MCF 10A (cell line): ENCODE measurements at regions of chr6 and their contacts with region 1.

Region 1: GRCh38 chr6:53794720-53795253 is at the start of gene LRRC1:
- DNase-seq: peak; percentile 91
- H3K4me3 Mint-ChIP-seq: peak within 1 kb of the TSS; percentile 92
- H3K27ac Mint-ChIP-seq: peak within 1 kb of the TSS; percentile 87
- H3K4me1 Mint-ChIP-seq: peaks cover 29% of the 10 kb centered on the region
- H3K27me3 Mint-ChIP-seq: no peaks in the 10 kb centered on the region
- CTCF ChIP-seq: no peak
- total RNA-seq, gene LRRC1: 16.0 and 18.6 TPM in 2 replicates

Region 2: GRCh38 chr6:53439556-53439955 is 355.2 kb before region 1 on chr6:
- CTCF ChIA-PET with region 1: no interaction called
- POLR2A ChIA-PET with region 1: no interaction called
- intact Hi-C with region 1: no loop called
- DNase-seq: no peak
- H3K4me3 Mint-ChIP-seq: no peak overlapping the region
- H3K27ac Mint-ChIP-seq: no peak overlapping the region
- H3K4me1 Mint-ChIP-seq: peaks cover 22% of the 10 kb centered on the region
- H3K27me3 Mint-ChIP-seq: no peaks in the 10 kb centered on the region
- CTCF ChIP-seq: no peak

Region 3: DNA sequence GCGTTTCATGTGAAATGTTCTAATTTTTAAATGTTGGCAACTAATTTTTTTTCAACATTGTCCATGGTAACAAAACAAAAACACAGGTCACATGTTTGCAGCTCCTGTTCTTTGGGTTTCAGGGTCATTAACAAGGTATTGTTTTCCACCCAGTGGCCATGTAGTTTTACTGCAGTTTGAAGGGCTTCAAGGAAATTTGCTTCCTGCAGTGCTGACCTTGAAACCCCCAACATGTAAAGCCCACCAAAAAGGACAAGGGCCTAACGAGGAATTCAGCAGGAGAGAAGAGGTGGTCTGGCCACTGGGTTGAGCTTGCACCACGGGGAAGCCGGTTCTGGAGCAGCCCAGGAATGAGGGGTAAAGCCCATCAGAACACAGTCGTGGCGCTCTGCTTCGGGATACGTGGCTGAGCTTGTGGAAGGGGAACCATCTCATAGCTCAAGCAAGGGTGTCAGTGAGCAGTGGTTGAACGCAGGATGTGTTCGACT is 115.3 kb before region 1 on chr6:
- CTCF ChIA-PET with region 1: no interaction called
- POLR2A ChIA-PET with region 1: no interaction called
- intact Hi-C with region 1: no loop called
- DNase-seq: peak; percentile 58
- H3K4me3 Mint-ChIP-seq: no peak overlapping the region
- H3K27ac Mint-ChIP-seq: peak overlapping the region; percentile 37
- H3K4me1 Mint-ChIP-seq: no peaks in the 10 kb centered on the region
- H3K27me3 Mint-ChIP-seq: no peaks in the 10 kb centered on the region
- CTCF ChIP-seq: peak; percentile 35

Region 4: GRCh38 chr6:53718597-53719460 is 76.0 kb before region 1 on chr6:
- CTCF ChIA-PET with region 1: interaction called, 20 read pairs
- POLR2A ChIA-PET with region 1: interaction called, 28 read pairs
- intact Hi-C with region 1: no loop called
- DNase-seq: peak; percentile 80
- H3K4me3 Mint-ChIP-seq: no peak overlapping the region
- H3K27ac Mint-ChIP-seq: peak overlapping the region; percentile 85
- H3K4me1 Mint-ChIP-seq: peaks cover 5% of the 10 kb centered on the region
- H3K27me3 Mint-ChIP-seq: no peaks in the 10 kb centered on the region
- CTCF ChIP-seq: peak; percentile 75

Region 5: DNA sequence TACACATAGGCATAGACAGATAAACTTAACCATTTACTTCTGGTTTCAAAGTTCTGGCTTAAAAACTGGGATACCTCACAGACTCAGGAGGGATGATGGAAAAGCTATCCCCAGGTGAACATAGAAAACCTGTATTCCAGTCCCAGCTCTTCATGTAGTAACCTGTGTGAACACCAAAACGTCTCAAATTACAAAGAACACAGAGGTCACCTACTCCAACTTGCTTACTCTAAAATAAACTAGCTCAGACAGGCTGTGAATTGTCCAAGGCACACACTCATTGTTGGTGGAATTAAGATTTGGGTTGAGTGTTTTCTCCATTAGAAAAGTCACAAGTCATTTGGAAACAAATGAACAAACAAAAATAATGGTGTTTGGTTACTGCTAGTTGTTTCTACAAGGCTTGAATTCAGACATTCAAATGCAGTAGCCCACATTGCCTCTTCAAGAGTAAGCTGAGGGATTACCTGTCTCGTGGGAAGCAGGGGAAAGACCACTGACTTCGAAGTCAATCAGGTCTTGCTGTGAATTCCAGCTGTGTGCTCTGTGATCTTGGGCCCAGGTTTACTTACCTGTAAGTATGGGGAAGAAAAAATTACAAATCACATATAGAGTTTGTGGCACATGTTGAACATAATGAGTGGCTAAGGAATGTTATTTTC is 48.2 kb before region 1 on chr6:
- CTCF ChIA-PET with region 1: interaction called, 12 read pairs
- POLR2A ChIA-PET with region 1: interaction called, 266 read pairs
- intact Hi-C with region 1: no loop called
- DNase-seq: peak; percentile 58
- H3K4me3 Mint-ChIP-seq: no peak overlapping the region
- H3K27ac Mint-ChIP-seq: peak overlapping the region; percentile 9
- H3K4me1 Mint-ChIP-seq: peaks cover 7% of the 10 kb centered on the region
- H3K27me3 Mint-ChIP-seq: no peaks in the 10 kb centered on the region
- CTCF ChIP-seq: no peak

Region 6: DNA sequence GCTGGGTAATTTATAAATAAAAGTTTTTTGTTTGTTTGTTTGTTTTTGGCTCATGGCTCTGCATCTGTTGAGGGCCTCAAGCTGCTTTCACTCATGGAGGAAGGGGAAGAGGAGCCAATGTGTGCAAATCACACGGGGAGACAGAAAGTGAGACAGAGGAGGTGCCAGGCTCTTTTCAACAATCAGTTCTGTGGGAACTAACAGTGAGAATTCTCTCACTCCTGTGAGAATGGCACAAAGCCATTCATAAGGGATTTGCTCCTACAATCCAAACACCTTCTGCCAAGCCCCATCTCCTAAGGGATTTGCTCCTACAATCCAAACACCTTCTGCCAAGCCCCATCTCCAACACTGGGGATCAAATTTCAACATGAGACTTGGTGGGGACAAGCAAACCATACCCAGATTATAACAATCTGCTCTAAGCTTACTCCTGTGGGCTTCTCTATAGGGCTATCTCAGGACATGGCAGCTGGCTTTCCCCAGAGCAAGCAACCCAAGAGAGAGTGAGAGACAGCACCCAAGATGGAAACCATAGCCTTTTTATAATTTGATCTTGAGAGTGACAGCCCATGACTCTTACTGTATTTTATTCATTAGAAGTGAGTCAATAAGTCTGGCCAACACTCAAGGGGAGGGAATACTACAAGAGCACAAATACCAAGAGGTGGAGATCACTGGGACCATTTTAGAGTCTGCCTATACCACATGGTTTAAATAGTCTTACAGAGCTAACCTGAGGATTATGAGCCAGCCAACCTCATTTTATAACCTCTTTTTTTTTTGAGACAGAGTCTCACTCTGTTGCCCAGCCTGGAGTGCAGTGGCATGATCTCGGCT is 22.8 kb before region 1 on chr6:
- CTCF ChIA-PET with region 1: interaction called, 6 read pairs
- POLR2A ChIA-PET with region 1: interaction called, 26 read pairs
- intact Hi-C with region 1: no loop called
- DNase-seq: no peak
- H3K4me3 Mint-ChIP-seq: no peak overlapping the region
- H3K27ac Mint-ChIP-seq: no peak overlapping the region
- H3K4me1 Mint-ChIP-seq: peaks cover 10% of the 10 kb centered on the region
- H3K27me3 Mint-ChIP-seq: no peaks in the 10 kb centered on the region
- CTCF ChIP-seq: no peak

Region 7: GRCh38 chr6:53829698-53830221 is 35.0 kb after region 1 on chr6:
- CTCF ChIA-PET with region 1: no interaction called
- POLR2A ChIA-PET with region 1: interaction called, 35 read pairs
- intact Hi-C with region 1: no loop called
- DNase-seq: no peak
- H3K4me3 Mint-ChIP-seq: no peak overlapping the region
- H3K27ac Mint-ChIP-seq: peak overlapping the region; percentile 75
- H3K4me1 Mint-ChIP-seq: peaks cover 48% of the 10 kb centered on the region
- H3K27me3 Mint-ChIP-seq: no peaks in the 10 kb centered on the region
- CTCF ChIP-seq: no peak

Region 8: GRCh38 chr6:53894091-53894490 is 99.3 kb after region 1 on chr6:
- CTCF ChIA-PET with region 1: interaction called, 3 read pairs
- POLR2A ChIA-PET with region 1: interaction called, 16 read pairs
- intact Hi-C with region 1: no loop called
- DNase-seq: peak; percentile 24
- H3K4me3 Mint-ChIP-seq: no peak overlapping the region
- H3K27ac Mint-ChIP-seq: no peak overlapping the region
- H3K4me1 Mint-ChIP-seq: peaks cover 10% of the 10 kb centered on the region
- H3K27me3 Mint-ChIP-seq: no peaks in the 10 kb centered on the region
- CTCF ChIP-seq: no peak